Activated CD8-positive, alpha-beta memory T cell treated with anti-CD3 and anti-CD28 coated beads, Interleukin-2, amount 10 ng/mL, durations not matched to agents 7 days and 5 days (primary cell): ENCODE measurements at regions of chr20 and their contacts with region 1.

Region 1: DNA sequence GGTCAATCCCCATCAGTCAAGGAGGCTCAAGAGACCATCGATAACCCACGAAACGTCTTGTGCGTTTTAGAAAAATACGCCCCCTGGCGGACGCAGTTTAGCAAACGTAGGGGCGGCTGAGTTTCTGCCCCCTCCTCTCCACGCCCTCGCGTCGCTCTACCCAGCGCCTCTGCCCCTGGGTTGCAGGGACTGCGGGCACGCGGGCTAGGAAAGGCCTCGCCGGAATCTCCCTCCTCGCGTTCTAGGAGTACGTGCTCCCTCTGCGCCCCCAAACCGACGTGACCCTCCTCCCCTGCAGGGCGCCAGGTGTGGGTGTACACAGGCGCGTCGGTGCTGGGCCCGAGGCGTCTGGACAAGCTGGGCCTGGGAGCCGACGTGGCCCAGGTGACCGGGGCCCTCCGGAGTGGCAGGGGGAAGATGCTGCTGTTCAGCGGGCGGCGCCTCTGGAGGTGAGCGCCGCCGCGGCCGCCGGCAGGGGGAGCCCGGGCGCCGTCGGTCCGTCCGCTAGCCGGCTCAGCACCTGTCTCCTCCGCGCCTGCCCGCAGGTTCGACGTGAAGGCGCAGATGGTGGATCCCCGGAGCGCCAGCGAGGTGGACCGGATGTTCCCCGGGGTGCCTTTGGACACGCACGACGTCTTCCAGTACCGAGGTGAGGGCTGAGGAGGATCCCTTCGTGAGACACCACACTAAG is 5.3 kb downstream of the MMP9 start:
- DNase-seq: peak; percentile 73
- ATAC-seq: peak; percentile 92
- H3K4me3 Mint-ChIP-seq: peak overlapping the region; percentile 21
- H3K27ac Mint-ChIP-seq: no peak overlapping the region
- H3K4me1 Mint-ChIP-seq: peaks cover 41% of the 10 kb centered on the region
- H3K27me3 Mint-ChIP-seq: peaks cover 71% of the 10 kb centered on the region

Region 2: GRCh38 chr20:45798935-45799642 is 214.9 kb before region 1 on chr20:
- CTCF ChIA-PET with region 1: interaction called, 13 read pairs
- DNase-seq: peak; percentile 83
- ATAC-seq: peak; percentile 97
- H3K4me3 Mint-ChIP-seq: no peak overlapping the region
- H3K27ac Mint-ChIP-seq: peak overlapping the region; percentile 65
- H3K4me1 Mint-ChIP-seq: peaks cover 23% of the 10 kb centered on the region
- H3K27me3 Mint-ChIP-seq: no peaks in the 10 kb centered on the region

Region 3: GRCh38 chr20:45934586-45935415 is 79.2 kb before region 1 on chr20 and contains the start of gene PCIF1:
- CTCF ChIA-PET with region 1: interaction called, 16 read pairs
- DNase-seq: peak; percentile 98
- ATAC-seq: peak; percentile 86
- H3K4me3 Mint-ChIP-seq: peak within 1 kb of the TSS; percentile 96
- H3K27ac Mint-ChIP-seq: peak within 1 kb of the TSS; percentile 98
- H3K4me1 Mint-ChIP-seq: peaks cover 35% of the 10 kb centered on the region
- H3K27me3 Mint-ChIP-seq: no peaks in the 10 kb centered on the region
- total RNA-seq, gene PCIF1: 41.6 to 52.3 TPM

Region 4: DNA sequence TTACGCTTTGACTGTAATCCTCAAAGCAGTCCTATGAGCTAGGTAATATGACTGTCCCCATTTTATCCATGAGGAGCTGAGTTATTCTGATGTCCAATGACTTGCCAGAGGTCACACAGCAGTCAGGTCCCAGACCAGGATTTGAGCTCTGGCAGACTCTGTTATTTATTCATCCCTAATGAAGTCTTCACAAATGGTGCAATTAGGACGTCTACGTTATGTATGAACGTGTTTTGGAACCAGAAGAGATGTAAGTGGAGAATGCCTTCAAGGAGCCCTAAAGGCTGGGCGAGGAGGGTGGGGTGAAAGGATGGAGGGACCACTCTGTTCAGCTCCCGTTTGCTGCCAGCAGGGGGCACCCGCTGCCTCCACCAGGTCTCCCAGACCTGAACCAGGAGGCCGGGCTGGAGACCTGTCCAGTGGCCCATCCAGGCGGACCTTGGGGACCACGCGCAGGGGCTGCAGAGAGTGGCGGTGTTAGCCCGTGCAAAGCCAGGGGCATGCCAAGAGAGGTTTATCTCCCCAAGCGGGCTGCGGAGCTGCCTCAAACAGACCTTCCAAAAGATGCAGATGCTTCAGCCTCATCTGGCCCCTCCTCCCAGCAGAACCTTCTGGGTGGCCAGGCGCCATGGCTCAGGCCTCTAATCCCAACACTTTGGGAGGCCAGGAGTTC is 26.7 kb before region 1 on chr20:
- CTCF ChIA-PET with region 1: interaction called, 289 read pairs
- DNase-seq: peak; percentile 84
- ATAC-seq: peak; percentile 97
- H3K4me3 Mint-ChIP-seq: no peak overlapping the region
- H3K27ac Mint-ChIP-seq: no peak overlapping the region
- H3K4me1 Mint-ChIP-seq: peaks cover 15% of the 10 kb centered on the region
- H3K27me3 Mint-ChIP-seq: peaks cover 25% of the 10 kb centered on the region

Region 5: DNA sequence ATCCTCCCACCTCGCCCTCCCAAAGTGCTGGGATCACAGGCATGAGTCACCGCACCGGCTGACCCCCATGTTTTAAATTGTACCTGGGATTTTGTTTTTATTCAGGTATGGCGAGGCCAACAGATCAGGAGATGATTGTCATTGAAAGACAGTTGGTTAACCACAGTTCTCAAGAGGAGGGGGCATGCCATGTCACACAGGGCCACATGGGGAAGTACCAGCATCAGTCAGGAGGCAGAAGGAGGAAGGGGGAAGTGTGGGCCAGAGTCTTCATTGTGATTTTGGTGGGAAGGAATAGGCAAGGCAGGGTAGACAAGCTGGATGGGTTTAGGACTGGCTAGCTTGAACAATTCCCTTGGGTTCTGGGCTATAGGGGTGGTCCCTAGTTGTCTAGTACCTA is 15.2 kb before region 1 on chr20:
- CTCF ChIA-PET with region 1: interaction called, 289 read pairs
- DNase-seq: peak; percentile 50
- ATAC-seq: peak; percentile 63
- H3K4me3 Mint-ChIP-seq: no peak overlapping the region
- H3K27ac Mint-ChIP-seq: no peak overlapping the region
- H3K4me1 Mint-ChIP-seq: peaks cover 40% of the 10 kb centered on the region
- H3K27me3 Mint-ChIP-seq: peaks cover 19% of the 10 kb centered on the region

Region 6: GRCh38 chr20:46031701-46032254 is 17.8 kb after region 1 on chr20:
- CTCF ChIA-PET with region 1: interaction called, 13 read pairs
- DNase-seq: no peak
- ATAC-seq: no peak
- H3K4me3 Mint-ChIP-seq: no peak overlapping the region
- H3K27ac Mint-ChIP-seq: no peak overlapping the region
- H3K4me1 Mint-ChIP-seq: no peaks in the 10 kb centered on the region
- H3K27me3 Mint-ChIP-seq: peaks cover 60% of the 10 kb centered on the region

Region 7: GRCh38 chr20:46406199-46406985 is 392.4 kb after region 1 on chr20 and contains the start of gene ELMO2:
- CTCF ChIA-PET with region 1: interaction called, 11 read pairs
- DNase-seq: peak; percentile 98
- ATAC-seq: peak; percentile 90
- H3K4me3 Mint-ChIP-seq: peak within 1 kb of the TSS; percentile 96
- H3K27ac Mint-ChIP-seq: peak within 1 kb of the TSS; percentile 89
- H3K4me1 Mint-ChIP-seq: peaks cover 69% of the 10 kb centered on the region
- H3K27me3 Mint-ChIP-seq: no peaks in the 10 kb centered on the region
- total RNA-seq, gene ELMO2: 80.3 to 85.5 TPM